B cell (primary cell): ENCODE measurements at regions of chrX and their contacts with region 1.

Region 1: GRCh38 chrX:119516157-119516702 is 48.0 kb downstream of the SLC25A5 start:
- DNase-seq: peak; percentile 80
- ATAC-seq: peak; percentile 89
- H3K4me3 ChIP-seq: no peak overlapping the region
- H3K4me3 Mint-ChIP-seq: no peak overlapping the region
- H3K27ac ChIP-seq: no peak overlapping the region
- H3K27ac Mint-ChIP-seq: peak overlapping the region; percentile 16
- H3K4me1 ChIP-seq: peaks cover 0 to 3% of the 10 kb centered on the region in 2 donors
- H3K4me1 Mint-ChIP-seq: peaks cover 5% of the 10 kb centered on the region
- H3K27me3 ChIP-seq: no peaks in the 10 kb centered on the region
- H3K27me3 Mint-ChIP-seq: no peaks in the 10 kb centered on the region
- CTCF ChIP-seq: peak; percentile 74

Region 2: GRCh38 chrX:119266364-119266995 is 249.8 kb before region 1 on chrX:
- CTCF ChIA-PET with region 1: no interaction called
- POLR2A ChIA-PET with region 1: no interaction called
- intact Hi-C with region 1: no loop called
- DNase-seq: peak; percentile 27
- ATAC-seq: no peak
- H3K4me3 ChIP-seq: no peak overlapping the region
- H3K4me3 Mint-ChIP-seq: no peak overlapping the region
- H3K27ac ChIP-seq: no peak overlapping the region
- H3K27ac Mint-ChIP-seq: no peak overlapping the region
- H3K4me1 ChIP-seq: no peaks in the 10 kb centered on the region
- H3K4me1 Mint-ChIP-seq: peaks cover 2% of the 10 kb centered on the region
- H3K27me3 ChIP-seq: peaks cover 0 to 2% (median 0%) of the 10 kb centered on the region in 4 experiments
- H3K27me3 Mint-ChIP-seq: peaks cover 8% of the 10 kb centered on the region
- CTCF ChIP-seq: peak; percentile 68

Region 3: DNA sequence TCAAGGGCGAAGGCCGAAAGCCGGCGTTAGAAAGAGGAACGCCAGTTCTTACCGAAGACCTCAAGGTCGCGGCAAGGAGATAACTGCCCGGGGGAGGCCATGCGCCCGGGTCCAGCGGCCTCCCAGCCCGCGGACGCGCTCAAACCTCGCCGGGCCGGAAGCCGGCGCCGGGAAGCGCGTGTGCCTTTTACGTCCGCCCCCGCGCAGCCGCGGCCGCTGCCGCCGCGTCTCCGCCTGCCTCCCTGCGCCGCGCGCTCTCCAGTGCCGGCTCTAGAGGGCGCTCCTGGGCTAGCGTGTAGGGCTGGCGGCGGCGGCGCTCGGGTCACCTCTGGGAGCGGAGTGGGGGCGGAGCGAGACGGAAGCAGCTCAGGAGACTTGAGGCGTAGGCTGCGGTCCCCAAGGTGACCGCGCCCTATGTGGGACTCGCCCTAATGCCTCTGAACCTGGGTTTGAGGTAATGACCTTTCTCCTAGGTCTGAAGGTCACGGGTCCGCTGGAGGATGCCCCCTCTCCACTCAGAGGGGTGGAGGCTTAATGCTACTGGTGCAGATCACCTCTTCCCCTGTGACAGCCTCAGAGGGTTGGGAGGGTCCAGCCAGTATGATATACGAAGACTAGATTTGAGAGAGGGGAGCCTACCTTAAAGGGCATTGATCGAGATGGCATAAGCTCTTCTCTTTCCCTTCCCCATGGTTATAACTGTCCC is 47.1 kb before region 1 on chrX:
- CTCF ChIA-PET with region 1: interaction called, 6 read pairs
- POLR2A ChIA-PET with region 1: no interaction called
- intact Hi-C with region 1: loop called (anchors 10 kb)
- DNase-seq: peak; percentile 92
- ATAC-seq: peak; percentile 76
- H3K4me3 ChIP-seq: peak overlapping the region; percentile 8 to 88 (median 83)
- H3K4me3 Mint-ChIP-seq: peak overlapping the region; percentile 85
- H3K27ac ChIP-seq: peak overlapping the region; percentile 92 to 95
- H3K27ac Mint-ChIP-seq: peak overlapping the region; percentile 92
- H3K4me1 ChIP-seq: peaks cover 3 to 15% of the 10 kb centered on the region in 2 donors
- H3K4me1 Mint-ChIP-seq: peaks cover 8% of the 10 kb centered on the region
- H3K27me3 ChIP-seq: no peaks in the 10 kb centered on the region
- H3K27me3 Mint-ChIP-seq: no peaks in the 10 kb centered on the region
- CTCF ChIP-seq: peak; percentile 68

Region 4: DNA sequence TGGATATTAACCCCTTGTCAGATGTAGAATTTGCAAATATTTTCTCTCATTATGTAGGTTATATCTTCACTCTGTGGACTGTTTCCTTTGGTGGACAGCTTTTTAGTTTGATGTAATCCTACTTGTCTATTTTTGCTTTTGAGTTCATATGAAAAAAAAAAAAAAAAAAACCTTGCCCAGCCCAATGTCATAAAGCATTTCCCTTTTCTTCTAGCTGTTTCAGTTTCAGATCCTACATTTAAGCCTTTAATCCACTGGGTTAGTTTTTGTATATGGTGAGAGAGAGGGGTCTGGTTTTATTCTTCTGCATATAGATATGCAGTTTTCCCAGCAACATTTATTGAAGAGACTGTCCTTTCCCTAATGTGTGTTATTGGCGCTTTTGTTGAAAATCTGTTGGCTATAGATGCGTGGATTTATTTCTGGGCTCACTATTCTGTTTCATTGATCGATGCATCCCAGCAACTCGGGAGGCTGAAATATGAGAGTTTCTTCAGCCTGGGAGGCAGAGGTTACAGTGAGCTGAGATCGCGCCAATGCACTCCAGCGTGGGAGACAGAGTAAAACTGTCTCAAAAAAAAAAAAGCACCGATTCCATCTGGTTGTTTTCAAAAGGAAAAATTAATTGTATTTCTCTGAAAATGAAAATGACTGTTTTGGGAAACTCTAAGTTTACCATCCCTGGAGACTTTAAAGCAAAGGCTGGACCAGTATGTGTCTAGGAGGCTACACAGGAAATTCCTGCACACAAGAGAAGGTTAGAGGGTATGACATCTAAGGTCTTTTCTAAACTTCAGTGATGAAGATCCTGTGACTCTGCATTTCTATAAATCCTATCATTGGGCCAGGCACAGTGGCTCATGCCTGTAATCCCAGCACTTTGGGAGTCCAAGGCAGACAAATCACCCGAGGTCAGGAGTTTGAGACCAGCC is 13.4 kb after region 1 on chrX:
- CTCF ChIA-PET with region 1: interaction called, 4 read pairs
- POLR2A ChIA-PET with region 1: no interaction called
- intact Hi-C with region 1: loop called (anchors 1 kb)
- DNase-seq: peak; percentile 53
- ATAC-seq: peak; percentile 64
- H3K4me3 ChIP-seq: peak overlapping the region in 2 of 5 experiments; percentile 25 to 39
- H3K4me3 Mint-ChIP-seq: peak overlapping the region; percentile 46
- H3K27ac ChIP-seq: peak overlapping the region; percentile 5 to 65
- H3K27ac Mint-ChIP-seq: peak overlapping the region; percentile 76
- H3K4me1 ChIP-seq: peaks cover 9 to 21% of the 10 kb centered on the region in 2 donors
- H3K4me1 Mint-ChIP-seq: peaks cover 22% of the 10 kb centered on the region
- H3K27me3 ChIP-seq: no peaks in the 10 kb centered on the region
- H3K27me3 Mint-ChIP-seq: no peaks in the 10 kb centered on the region
- CTCF ChIP-seq: no peak

Region 5: GRCh38 chrX:119565107-119565663 is 49.0 kb after region 1 on chrX and contains the start of gene STEEP1:
- CTCF ChIA-PET with region 1: no interaction called
- POLR2A ChIA-PET with region 1: no interaction called
- intact Hi-C with region 1: no loop called
- DNase-seq: peak; percentile 88
- ATAC-seq: peak; percentile 89
- H3K4me3 ChIP-seq: peak within 1 kb of the TSS; percentile 59 to 73 (median 68)
- H3K4me3 Mint-ChIP-seq: peak within 1 kb of the TSS; percentile 90
- H3K27ac ChIP-seq: peak within 1 kb of the TSS; percentile 54 to 69
- H3K27ac Mint-ChIP-seq: peak within 1 kb of the TSS; percentile 86
- H3K4me1 ChIP-seq: peaks cover 0 to 5% of the 10 kb centered on the region in 2 donors
- H3K4me1 Mint-ChIP-seq: peaks cover 20% of the 10 kb centered on the region
- H3K27me3 ChIP-seq: no peaks in the 10 kb centered on the region
- H3K27me3 Mint-ChIP-seq: no peaks in the 10 kb centered on the region
- CTCF ChIP-seq: no peak
- total RNA-seq, gene STEEP1: 24.9 and 27.6 TPM in 2 replicates

Region 6: DNA sequence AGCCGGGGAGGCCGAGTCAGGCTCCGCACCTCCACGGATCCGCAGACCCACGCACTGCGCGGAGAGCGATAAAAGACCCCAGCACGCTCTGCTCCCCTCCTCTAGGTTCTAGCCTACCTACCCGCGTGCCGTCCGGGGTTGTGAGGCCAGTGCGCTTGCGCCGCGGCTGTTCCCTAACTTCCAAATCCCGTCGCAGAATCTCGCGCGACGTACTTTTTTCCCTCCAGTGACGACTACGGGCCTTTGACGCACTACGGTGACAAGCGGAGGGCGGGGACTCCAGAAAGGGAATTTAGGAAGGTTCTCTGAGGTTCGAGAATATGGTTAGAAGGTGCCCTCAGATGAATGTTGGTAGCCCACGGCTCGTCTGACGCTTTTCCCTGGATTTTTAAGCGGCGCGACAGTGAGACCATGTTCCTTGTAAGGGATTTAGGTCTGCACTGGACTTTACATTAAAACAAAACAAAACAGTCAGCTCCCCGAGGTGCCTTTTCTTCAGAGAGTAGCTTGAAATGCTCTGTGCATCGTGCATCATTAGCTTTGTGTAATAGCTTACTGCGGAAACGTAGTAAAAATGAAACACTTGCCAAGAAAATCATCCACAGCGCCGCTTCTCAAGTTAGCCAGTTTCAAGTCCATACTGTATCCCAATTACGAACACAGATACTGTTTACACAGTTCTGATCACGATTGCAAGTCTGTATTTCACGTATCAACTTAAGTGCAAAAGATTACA is 90.2 kb after region 1 on chrX and contains the start of gene NKRF:
- CTCF ChIA-PET with region 1: interaction called, 8 read pairs
- POLR2A ChIA-PET with region 1: no interaction called
- intact Hi-C with region 1: loop called (anchors 2 kb)
- DNase-seq: peak; percentile 94
- ATAC-seq: peak; percentile 77
- H3K4me3 ChIP-seq: peak within 1 kb of the TSS; percentile 54 to 86 (median 71)
- H3K4me3 Mint-ChIP-seq: peak within 1 kb of the TSS; percentile 97
- H3K27ac ChIP-seq: peak within 1 kb of the TSS; percentile 87 to 94
- H3K27ac Mint-ChIP-seq: peak within 1 kb of the TSS; percentile 99
- H3K4me1 ChIP-seq: peaks cover 12 to 29% of the 10 kb centered on the region in 2 donors
- H3K4me1 Mint-ChIP-seq: peaks cover 42% of the 10 kb centered on the region
- H3K27me3 ChIP-seq: no peaks in the 10 kb centered on the region
- H3K27me3 Mint-ChIP-seq: no peaks in the 10 kb centered on the region
- CTCF ChIP-seq: no peak
- total RNA-seq, gene NKRF: 16.1 and 16.2 TPM in 2 replicates

Region 7: GRCh38 chrX:119753571-119754257 is 237.5 kb after region 1 on chrX:
- CTCF ChIA-PET with region 1: interaction called, 5 read pairs
- POLR2A ChIA-PET with region 1: interaction called, 3 read pairs
- intact Hi-C with region 1: loop called (anchors 1 kb)
- DNase-seq: peak; percentile 69
- ATAC-seq: peak; percentile 11
- H3K4me3 ChIP-seq: no peak overlapping the region
- H3K4me3 Mint-ChIP-seq: peak overlapping the region; percentile 59
- H3K27ac ChIP-seq: peak overlapping the region; percentile 37 to 89
- H3K27ac Mint-ChIP-seq: peak overlapping the region; percentile 96
- H3K4me1 ChIP-seq: peaks cover 43 to 47% of the 10 kb centered on the region in 2 donors
- H3K4me1 Mint-ChIP-seq: peaks cover 41% of the 10 kb centered on the region
- H3K27me3 ChIP-seq: no peaks in the 10 kb centered on the region
- H3K27me3 Mint-ChIP-seq: no peaks in the 10 kb centered on the region
- CTCF ChIP-seq: peak; percentile 63

Region 8: DNA sequence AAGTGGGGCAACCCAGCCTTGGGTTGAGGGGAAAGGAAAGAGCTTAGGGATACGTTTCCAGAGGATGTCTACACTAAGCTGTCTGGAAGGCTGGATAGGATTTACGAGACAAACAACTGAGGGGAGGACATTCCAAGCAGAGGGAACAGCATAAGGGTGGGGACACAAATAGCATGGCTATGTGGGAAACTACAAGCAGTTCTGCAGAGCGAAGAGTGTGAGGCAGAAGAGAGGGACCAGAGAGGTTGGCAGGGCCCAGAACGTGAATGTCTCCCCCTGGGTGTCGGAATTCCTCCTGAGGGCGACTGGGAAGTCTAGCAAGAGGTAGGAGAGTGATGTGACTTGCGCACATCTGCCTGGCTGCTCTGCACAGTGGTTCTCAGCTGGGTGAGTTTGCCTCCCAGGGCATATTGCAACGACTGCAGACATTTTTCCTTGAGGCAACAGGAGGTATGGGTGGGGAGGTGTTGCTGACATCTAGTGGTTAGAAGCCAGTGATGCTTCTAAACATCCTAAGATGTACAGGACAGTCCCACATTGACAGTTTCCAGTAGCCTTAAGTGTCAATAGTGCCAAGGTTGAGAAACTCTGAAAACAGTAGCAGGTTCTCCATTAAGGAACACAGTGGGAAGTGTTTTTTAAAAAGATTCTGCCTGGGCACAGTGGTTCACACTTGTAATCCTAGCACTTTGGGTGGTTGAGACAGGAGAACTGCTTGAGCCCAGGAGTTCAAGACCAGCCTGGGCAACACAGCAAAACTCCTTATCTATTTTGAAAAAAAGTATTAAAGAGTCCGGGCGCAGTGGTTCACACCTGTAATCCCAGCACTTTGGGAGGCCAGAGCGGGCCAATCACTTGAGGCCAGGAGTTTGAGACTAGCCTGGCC is 364.6 kb after region 1 on chrX:
- CTCF ChIA-PET with region 1: interaction called, 5 read pairs
- POLR2A ChIA-PET with region 1: no interaction called
- intact Hi-C with region 1: loop called (anchors 1 kb)
- DNase-seq: peak; percentile 58
- ATAC-seq: peak; percentile 63
- H3K4me3 ChIP-seq: no peak overlapping the region
- H3K4me3 Mint-ChIP-seq: no peak overlapping the region
- H3K27ac ChIP-seq: no peak overlapping the region
- H3K27ac Mint-ChIP-seq: no peak overlapping the region
- H3K4me1 ChIP-seq: peaks cover 0 to 5% of the 10 kb centered on the region in 2 donors
- H3K4me1 Mint-ChIP-seq: peaks cover 12% of the 10 kb centered on the region
- H3K27me3 ChIP-seq: no peaks in the 10 kb centered on the region
- H3K27me3 Mint-ChIP-seq: no peaks in the 10 kb centered on the region
- CTCF ChIP-seq: peak; percentile 54